ENCODE measurements at regions of chr5 and their contacts with region 1.

Region 1: GRCh38 chr5:173451031-173451430 is 122.8 kb upstream of the STC2 start:
- DNase-seq: no peak
- H3K4me3 ChIP-seq: no peak overlapping the region
- H3K27ac ChIP-seq: no peak overlapping the region
- H3K4me1 ChIP-seq: peaks cover 38% of the 10 kb centered on the region
- H3K27me3 ChIP-seq: no peaks in the 10 kb centered on the region
- CTCF ChIP-seq: peak; percentile 30 to 50

Region 2: DNA sequence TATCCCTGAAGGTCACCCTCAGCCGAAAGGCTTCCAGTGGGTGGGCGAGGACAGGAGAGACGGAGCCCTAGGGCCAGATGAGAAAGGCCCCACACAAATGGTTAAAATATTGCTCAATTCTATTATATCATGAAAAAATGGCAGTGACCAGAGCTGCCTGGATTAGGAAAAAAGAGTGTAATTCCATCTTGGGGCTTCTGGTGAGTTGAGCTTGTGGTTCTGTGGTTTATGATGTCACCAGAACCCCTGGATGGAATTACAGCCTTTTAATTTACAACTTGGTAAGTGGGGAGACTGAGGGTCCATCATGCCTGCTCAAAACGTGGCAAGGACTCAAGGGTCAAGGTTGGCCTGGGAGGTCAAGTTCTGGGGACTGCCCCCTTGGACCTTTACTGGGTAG is 67.3 kb before region 1 on chr5:
- CTCF ChIA-PET with region 1: no interaction called
- dilution Hi-C with region 1: no loop called
- in situ Hi-C with region 1: no loop called
- intact Hi-C with region 1: no loop called
- DNase-seq: no peak
- H3K4me3 ChIP-seq: no peak overlapping the region
- H3K27ac ChIP-seq: no peak overlapping the region
- H3K4me1 ChIP-seq: no peaks in the 10 kb centered on the region
- H3K27me3 ChIP-seq: no peaks in the 10 kb centered on the region
- CTCF ChIP-seq: no peak

Region 3: GRCh38 chr5:173472141-173472543 is 21.1 kb after region 1 on chr5:
- CTCF ChIA-PET with region 1: no interaction called
- dilution Hi-C with region 1: no loop called
- in situ Hi-C with region 1: no loop called
- intact Hi-C with region 1: loop called (anchors 2 kb)
- DNase-seq: peak; percentile 91
- H3K4me3 ChIP-seq: no peak overlapping the region
- H3K27ac ChIP-seq: peak overlapping the region; percentile 79
- H3K4me1 ChIP-seq: peaks cover 24% of the 10 kb centered on the region
- H3K27me3 ChIP-seq: no peaks in the 10 kb centered on the region
- CTCF ChIP-seq: no peak

Region 4: GRCh38 chr5:173483160-173483559 is 32.1 kb after region 1 on chr5:
- CTCF ChIA-PET with region 1: no interaction called
- dilution Hi-C with region 1: no loop called
- in situ Hi-C with region 1: no loop called
- intact Hi-C with region 1: loop called (anchors 1 kb)
- DNase-seq: no peak
- H3K4me3 ChIP-seq: no peak overlapping the region
- H3K27ac ChIP-seq: peak overlapping the region; percentile 35
- H3K4me1 ChIP-seq: peaks cover 10% of the 10 kb centered on the region
- H3K27me3 ChIP-seq: no peaks in the 10 kb centered on the region
- CTCF ChIP-seq: no peak

Region 5: DNA sequence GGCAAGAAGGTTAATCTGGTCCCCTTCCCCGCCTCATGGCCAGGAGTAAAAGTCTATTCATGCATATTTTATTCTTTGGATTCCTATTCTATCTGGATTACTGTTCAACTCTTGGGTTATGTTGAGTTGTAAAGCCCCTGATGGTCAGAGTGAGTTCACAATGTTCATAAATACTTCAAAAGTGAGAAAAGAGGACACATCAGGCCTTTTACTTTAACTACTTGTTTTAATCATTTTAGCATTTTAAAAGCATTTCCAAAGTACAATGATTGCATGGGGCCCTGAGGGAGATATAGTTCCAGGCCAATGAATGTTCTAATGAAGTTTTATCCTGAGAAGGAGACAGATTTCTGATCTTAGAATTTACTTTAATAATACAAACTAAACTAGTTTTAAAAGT is 71.5 kb after region 1 on chr5:
- CTCF ChIA-PET with region 1: no interaction called
- dilution Hi-C with region 1: loop called (anchors 5 kb)
- in situ Hi-C with region 1: no loop called
- intact Hi-C with region 1: no loop called
- DNase-seq: no peak
- H3K4me3 ChIP-seq: no peak overlapping the region
- H3K27ac ChIP-seq: no peak overlapping the region
- H3K4me1 ChIP-seq: no peaks in the 10 kb centered on the region
- H3K27me3 ChIP-seq: peaks cover 6% of the 10 kb centered on the region
- CTCF ChIP-seq: no peak

Region 6: GRCh38 chr5:173573126-173573960 is 122.3 kb after region 1 on chr5:
- CTCF ChIA-PET with region 1: no interaction called
- dilution Hi-C with region 1: no loop called
- in situ Hi-C with region 1: no loop called
- intact Hi-C with region 1: loop called (anchors 2 kb)
- DNase-seq: peak; percentile 37
- H3K4me3 ChIP-seq: peak overlapping the region in 1 of 3 experiments; percentile 16
- H3K27ac ChIP-seq: no peak overlapping the region
- H3K4me1 ChIP-seq: peaks cover 15% of the 10 kb centered on the region
- H3K27me3 ChIP-seq: no peaks in the 10 kb centered on the region
- CTCF ChIP-seq: peak; percentile 80 to 96

Measured in mammary epithelial cell (primary cell).